Activated CD4-positive, alpha-beta T cell treated with anti-CD3 and anti-CD28 coated beads, Interleukin-2, amount 10 ng/mL, durations not matched to agents 24 days and 14 days (primary cell): ENCODE measurements at regions of chrX and their contacts with region 1.

Region 1: GRCh38 chrX:31136144-31136611 is 64.3 kb upstream of the FTHL17 start:
- DNase-seq: no peak
- H3K4me3 Mint-ChIP-seq: peak overlapping the region; percentile 56
- H3K27ac Mint-ChIP-seq: peak overlapping the region; percentile 51
- H3K4me1 Mint-ChIP-seq: peaks cover 12% of the 10 kb centered on the region
- H3K27me3 Mint-ChIP-seq: no peaks in the 10 kb centered on the region

Region 2: GRCh38 chrX:31061091-31061490 is 75.1 kb before region 1 on chrX:
- intact Hi-C with region 1: loop called (anchors 10 kb)
- DNase-seq: no peak
- H3K4me3 Mint-ChIP-seq: no peak overlapping the region
- H3K27ac Mint-ChIP-seq: no peak overlapping the region
- H3K4me1 Mint-ChIP-seq: peaks cover 10% of the 10 kb centered on the region
- H3K27me3 Mint-ChIP-seq: no peaks in the 10 kb centered on the region

Region 3: GRCh38 chrX:31228415-31228832 is 92.2 kb after region 1 on chrX:
- intact Hi-C with region 1: no loop called
- DNase-seq: no peak
- H3K4me3 Mint-ChIP-seq: no peak overlapping the region
- H3K27ac Mint-ChIP-seq: no peak overlapping the region
- H3K4me1 Mint-ChIP-seq: no peaks in the 10 kb centered on the region
- H3K27me3 Mint-ChIP-seq: peaks cover 2% of the 10 kb centered on the region